HEK293T (cell line): ENCODE measurements at regions of chr19 and their contacts with region 1.

Region 1: DNA sequence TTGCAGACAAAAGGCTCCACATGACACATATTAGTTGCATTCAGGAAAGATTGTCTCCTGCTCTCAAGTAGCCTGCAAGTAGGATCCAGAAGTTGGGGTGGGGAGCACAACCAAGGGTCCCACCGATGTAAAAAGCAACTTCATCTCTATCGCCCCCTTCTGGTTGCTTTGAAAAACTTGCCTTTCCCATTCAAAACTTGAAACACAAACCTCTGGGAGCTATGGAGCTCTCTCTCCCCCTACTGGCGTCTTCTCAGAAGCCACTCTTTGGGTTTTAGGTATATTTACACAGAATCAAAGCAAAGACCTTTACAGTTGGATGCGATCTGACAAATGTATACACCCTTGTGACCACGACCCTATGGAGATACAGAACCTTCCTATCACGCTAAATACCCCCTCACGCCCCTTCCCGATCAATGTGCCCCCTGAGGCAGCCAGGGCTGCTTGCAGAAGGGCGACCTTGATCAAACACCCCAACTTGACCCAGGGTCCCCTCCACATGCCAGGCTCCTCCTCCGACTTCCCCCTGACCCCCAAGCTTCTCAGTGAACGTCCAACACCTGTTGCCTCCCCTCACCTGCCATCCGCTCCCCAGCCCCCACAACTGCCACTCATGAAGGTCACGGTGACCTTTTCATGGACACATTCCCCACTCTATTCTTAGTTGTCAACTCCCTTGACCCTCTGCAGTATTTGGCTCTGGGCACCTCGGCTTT is 10.1 kb downstream of the NOSIP start:
- DNase-seq: peak; percentile 81

Region 2: GRCh38 chr19:49502866-49503581 is 67.3 kb before region 1 on chr19:
- CTCF ChIA-PET with region 1: interaction called, 15 read pairs
- POLR2A ChIA-PET with region 1: interaction called, 3 read pairs
- DNase-seq: peak; percentile 52

Region 3: GRCh38 chr19:49546825-49547565 is 23.3 kb before region 1 on chr19:
- CTCF ChIA-PET with region 1: interaction called, 24 read pairs
- POLR2A ChIA-PET with region 1: no interaction called
- DNase-seq: peak; percentile 79

Region 4: DNA sequence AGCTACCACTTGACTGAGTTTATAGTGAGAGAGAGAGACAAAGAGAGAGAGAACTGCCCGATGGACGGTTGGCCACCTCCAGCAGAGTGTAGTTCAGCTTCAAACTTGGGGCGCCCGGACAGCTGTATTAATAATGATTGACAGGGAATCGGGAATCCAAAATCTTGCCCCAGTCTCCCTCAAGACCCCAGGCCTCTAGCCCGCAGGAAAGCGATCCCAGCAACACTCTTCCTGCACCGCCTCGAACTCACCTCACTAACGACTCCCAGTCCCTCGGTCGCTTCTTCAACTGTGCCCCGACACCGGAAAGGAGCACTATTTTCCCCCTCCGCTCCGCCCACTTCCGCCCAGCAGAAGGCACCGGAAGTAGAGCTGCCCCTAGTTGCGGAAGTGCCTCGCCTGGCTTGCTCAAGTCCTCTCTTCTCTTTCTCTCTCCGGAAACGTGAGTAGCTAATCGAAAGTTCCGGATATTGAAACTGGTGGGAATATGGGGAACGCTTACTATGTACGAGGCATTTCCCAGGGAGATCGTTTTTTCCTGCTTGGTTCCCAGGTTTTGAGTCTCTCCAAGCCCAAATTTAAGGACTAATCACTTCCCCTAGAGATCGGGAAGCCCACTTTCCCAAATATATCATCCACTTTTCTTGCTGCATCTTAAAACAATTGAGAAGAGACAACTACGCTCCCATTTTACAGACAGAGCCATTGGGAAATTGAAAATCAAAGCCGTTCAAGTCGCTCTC is 10.1 kb after region 1 on chr19 and contains the start of gene NOSIP:
- CTCF ChIA-PET with region 1: interaction called, 10 read pairs
- POLR2A ChIA-PET with region 1: interaction called, 17 read pairs
- DNase-seq: peak; percentile 93